Transverse colon (tissue), 4 donors: ENCODE measurements at regions of chr5 and their contacts with region 1.

Region 1: DNA sequence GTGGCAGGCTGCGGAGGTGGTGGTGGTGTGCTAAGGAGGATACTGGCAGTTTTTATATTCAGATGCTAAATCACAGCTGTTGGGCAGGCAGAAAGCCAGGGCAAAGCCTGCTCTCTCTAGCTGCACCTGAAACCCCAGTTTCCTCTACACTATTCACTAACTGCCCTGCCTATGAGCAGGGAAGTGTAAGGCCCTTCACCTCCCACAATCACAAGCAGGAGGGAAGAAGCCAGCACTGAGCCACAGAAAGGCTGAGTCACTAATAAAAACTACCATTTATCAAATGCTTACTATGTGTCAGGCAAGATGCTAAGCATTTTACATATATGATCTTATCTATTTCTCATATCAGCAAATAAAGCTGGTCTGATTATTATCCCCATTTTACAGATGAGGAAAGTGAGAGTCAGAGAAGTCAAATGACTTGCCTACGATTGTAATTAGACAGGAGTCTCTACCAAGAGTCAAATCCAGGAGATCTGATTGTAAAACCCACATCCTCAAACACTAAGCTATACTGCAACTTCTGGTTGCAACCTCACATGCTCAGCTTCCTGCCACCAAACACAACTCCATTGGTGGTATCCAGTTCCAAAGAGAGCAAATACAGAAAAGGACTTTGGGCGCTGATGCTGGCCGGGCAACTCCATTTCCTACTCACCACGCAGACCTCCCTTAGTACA is 17.7 kb upstream of the IL6ST start:
- DNase-seq: peak; percentile 20
- H3K4me3 ChIP-seq: no peak overlapping the region
- H3K27ac ChIP-seq: peak overlapping the region; percentile 37 to 56 (median 48)
- H3K4me1 ChIP-seq: peaks cover 0 to 16% (median 6%) of the 10 kb centered on the region in 4 donors
- H3K27me3 ChIP-seq: no peaks in the 10 kb centered on the region
- CTCF ChIP-seq: no peak
- EP300 ChIP-seq: no peak
- POLR2A ChIP-seq: no peak

Region 2: DNA sequence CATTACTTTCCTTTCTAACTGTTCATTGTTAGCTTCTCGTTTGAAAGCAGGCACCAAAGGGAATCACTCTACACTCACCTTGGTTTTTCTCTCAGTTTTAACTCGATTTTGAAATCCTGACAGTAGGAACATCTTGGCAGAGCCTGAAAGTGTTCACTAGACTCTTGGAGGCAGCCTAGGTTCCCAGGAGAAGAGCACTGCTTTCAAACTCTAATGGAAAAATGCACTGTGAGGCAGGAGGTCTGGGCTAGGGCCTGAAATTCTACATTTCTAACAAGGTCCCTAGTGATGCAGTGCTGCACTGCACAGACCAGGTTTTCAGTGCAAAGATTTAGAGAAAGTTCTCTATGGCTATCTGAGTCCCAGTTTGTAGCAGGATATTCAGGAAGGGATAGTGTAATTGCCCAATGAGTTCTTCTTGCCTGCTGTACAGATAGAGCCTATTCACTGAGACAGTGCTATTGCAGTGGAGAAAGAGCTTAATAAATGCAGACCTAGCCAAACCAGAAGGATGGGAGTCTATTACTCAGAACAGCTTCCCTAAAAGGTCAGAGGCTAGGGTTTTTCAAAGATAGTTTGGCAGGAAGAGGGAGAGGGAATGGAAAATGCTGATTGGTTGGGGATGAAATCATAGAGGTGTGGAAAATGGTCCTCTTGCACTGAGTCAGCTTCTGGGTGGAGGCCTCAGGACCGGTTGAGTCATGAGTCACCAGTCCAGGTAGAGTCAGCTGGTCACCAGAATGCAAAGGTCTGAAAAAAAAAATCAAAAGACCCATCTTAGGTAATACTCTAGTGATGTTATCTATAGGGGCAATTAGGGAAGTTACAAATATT is 1315.4 kb after region 1 on chr5:
- in situ Hi-C with region 1: no loop called
- intact Hi-C with region 1: loop called (anchors 10 kb)
- DNase-seq: no peak
- H3K4me3 ChIP-seq: no peak overlapping the region
- H3K27ac ChIP-seq: no peak overlapping the region
- H3K4me1 ChIP-seq: peaks cover 0 to 8% (median 0%) of the 10 kb centered on the region in 4 donors
- H3K27me3 ChIP-seq: no peaks in the 10 kb centered on the region
- CTCF ChIP-seq: no peak
- EP300 ChIP-seq: no peak
- POLR2A ChIP-seq: no peak